A673 (cell line): ENCODE measurements at regions of chr10 and their contacts with region 1.

Region 1: GRCh38 chr10:30241422-30242110 is 107.5 kb downstream of the MTPAP start:
- DNase-seq: no peak
- H3K4me3 ChIP-seq: no peak overlapping the region
- H3K27ac ChIP-seq: peak overlapping the region; percentile 45
- H3K4me1 ChIP-seq: peaks cover 14% of the 10 kb centered on the region
- H3K27me3 ChIP-seq: no peaks in the 10 kb centered on the region
- CTCF ChIP-seq: no peak

Region 2: DNA sequence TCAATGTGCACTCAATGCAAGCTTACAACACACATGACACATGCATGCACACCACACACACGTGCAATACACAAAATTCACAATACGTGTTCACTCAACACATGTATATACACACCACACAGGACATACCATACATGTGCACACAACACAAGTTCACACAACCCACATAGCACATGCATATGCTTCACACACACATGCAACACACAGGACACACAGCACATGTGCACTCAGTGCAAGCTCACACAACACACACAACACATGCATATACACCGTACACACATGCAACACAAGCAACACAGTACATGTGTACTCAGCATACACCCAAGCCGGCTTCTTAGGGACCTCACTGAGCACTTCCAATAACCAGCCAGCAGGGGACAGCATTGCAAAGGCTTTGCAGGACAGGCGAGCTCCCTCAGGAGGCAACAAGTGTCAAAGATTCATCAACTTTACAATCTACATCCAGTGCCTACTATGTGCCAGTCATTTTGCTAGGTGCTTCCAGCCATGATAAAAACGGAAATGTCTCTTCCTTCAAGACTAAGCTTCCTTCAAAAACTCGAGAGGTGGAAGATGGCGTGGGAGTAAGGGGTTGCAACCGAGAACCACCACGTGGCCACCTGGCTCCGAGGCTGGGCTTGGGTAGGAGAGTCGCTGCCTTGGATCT is 243.3 kb before region 1 on chr10:
- CTCF ChIA-PET with region 1: interaction called, 14 read pairs
- POLR2A ChIA-PET with region 1: no interaction called
- intact Hi-C with region 1: loop called (anchors 1 kb)
- DNase-seq: peak; percentile 90
- H3K4me3 ChIP-seq: no peak overlapping the region
- H3K27ac ChIP-seq: no peak overlapping the region
- H3K4me1 ChIP-seq: peaks cover 23% of the 10 kb centered on the region
- H3K27me3 ChIP-seq: no peaks in the 10 kb centered on the region
- CTCF ChIP-seq: peak; percentile 99

Region 3: GRCh38 chr10:30073767-30074060 is 167.9 kb before region 1 on chr10:
- CTCF ChIA-PET with region 1: interaction called, 3 read pairs
- POLR2A ChIA-PET with region 1: no interaction called
- intact Hi-C with region 1: loop called (anchors 1 kb)
- DNase-seq: peak; percentile 92
- H3K4me3 ChIP-seq: no peak overlapping the region
- H3K27ac ChIP-seq: peak overlapping the region; percentile 96
- H3K4me1 ChIP-seq: peaks cover 68% of the 10 kb centered on the region
- H3K27me3 ChIP-seq: no peaks in the 10 kb centered on the region
- CTCF ChIP-seq: no peak

Region 4: GRCh38 chr10:30186371-30186875 is 55.1 kb before region 1 on chr10:
- CTCF ChIA-PET with region 1: no interaction called
- POLR2A ChIA-PET with region 1: no interaction called
- intact Hi-C with region 1: no loop called
- DNase-seq: no peak
- H3K4me3 ChIP-seq: no peak overlapping the region
- H3K27ac ChIP-seq: no peak overlapping the region
- H3K4me1 ChIP-seq: no peaks in the 10 kb centered on the region
- H3K27me3 ChIP-seq: no peaks in the 10 kb centered on the region
- CTCF ChIP-seq: no peak

Region 5: GRCh38 chr10:30270247-30270646 is 28.7 kb after region 1 on chr10:
- CTCF ChIA-PET with region 1: no interaction called
- POLR2A ChIA-PET with region 1: interaction called, 19 read pairs
- intact Hi-C with region 1: no loop called
- DNase-seq: peak; percentile 24
- H3K4me3 ChIP-seq: no peak overlapping the region
- H3K27ac ChIP-seq: no peak overlapping the region
- H3K4me1 ChIP-seq: no peaks in the 10 kb centered on the region
- H3K27me3 ChIP-seq: no peaks in the 10 kb centered on the region
- CTCF ChIP-seq: peak; percentile 50; the same call in 1 of the 2 replicates